Activated CD4-positive, alpha-beta memory T cell treated with anti-CD3 and anti-CD28 coated beads for 36 hours (primary cell): ENCODE measurements at regions of chr7 and their contacts with region 1.

Region 1: DNA sequence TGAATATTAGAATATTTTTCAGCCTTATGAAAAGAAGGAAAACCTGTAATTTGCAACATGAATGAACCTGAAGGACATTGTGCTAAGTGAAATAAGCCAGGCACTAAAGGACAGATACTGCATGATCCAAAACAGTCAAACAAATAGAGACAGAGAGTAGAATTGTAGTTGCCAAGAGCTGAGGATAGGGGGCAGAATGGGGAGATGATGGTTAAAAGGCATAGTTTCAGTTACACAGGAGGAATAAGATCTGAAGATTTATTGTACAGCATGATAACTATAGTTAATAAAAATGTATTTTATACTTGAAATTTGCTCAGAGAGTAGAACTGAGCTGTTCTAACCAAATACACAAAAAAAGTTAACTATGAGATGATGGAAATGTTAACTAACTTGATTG is 149.0 kb upstream of the TMEM106B start:
- DNase-seq: no peak
- H3K4me3 Mint-ChIP-seq: no peak overlapping the region
- H3K27ac Mint-ChIP-seq: no peak overlapping the region
- H3K4me1 Mint-ChIP-seq: peaks cover 13% of the 10 kb centered on the region
- H3K27me3 Mint-ChIP-seq: no peaks in the 10 kb centered on the region

Region 2: DNA sequence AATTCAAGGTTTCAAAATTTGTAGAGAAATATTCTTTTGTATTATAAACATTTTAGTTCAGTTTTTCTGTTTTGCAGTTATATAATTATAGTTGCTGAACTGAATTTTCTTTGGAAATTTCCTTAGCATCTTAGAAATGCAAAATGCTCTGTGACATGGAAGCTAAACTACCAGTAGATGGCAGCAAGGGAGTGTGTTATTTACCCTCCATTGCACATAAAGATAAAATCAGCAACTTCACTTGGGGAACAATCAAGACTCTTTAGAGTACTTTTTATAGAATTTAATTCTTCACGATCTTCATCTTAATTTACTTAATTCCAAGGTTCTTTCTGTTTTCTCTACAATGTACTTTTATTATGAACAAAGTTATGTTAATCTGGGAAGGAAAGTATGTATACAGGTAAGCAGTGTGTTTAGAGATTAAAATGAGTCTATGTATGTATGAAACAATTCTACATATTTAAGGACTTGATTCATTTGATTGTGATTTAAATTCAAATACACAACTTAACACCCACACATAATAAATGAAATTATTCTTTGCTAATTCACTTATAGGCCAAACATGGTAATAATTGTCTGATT is 634.3 kb before region 1 on chr7:
- CTCF ChIA-PET with region 1: no interaction called
- POLR2A ChIA-PET with region 1: no interaction called
- intact Hi-C with region 1: loop called (anchors 5 kb)
- DNase-seq: no peak
- H3K4me3 Mint-ChIP-seq: no peak overlapping the region
- H3K27ac Mint-ChIP-seq: no peak overlapping the region
- H3K4me1 Mint-ChIP-seq: no peaks in the 10 kb centered on the region
- H3K27me3 Mint-ChIP-seq: no peaks in the 10 kb centered on the region

Region 3: DNA sequence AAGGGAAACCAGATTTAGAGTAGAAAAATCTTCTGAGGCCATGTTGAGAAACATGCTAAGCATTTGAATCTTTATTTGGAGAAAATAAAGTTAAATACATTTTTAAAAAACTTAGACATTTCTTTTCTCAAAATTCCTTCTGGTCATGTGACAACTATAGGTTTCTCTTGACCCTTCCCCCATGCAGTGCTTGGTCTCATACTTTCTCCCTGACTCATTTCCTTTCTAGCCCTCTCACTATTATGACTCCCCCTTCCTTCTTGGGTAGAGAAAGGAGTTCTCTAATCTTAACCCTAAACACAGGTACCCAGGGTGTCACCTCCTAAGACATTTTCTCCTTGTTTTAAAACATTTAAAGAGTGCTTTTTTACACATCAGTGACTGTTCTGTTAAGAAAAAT is 30.4 kb before region 1 on chr7:
- CTCF ChIA-PET with region 1: no interaction called
- POLR2A ChIA-PET with region 1: no interaction called
- intact Hi-C with region 1: no loop called
- DNase-seq: no peak
- H3K4me3 Mint-ChIP-seq: no peak overlapping the region
- H3K27ac Mint-ChIP-seq: no peak overlapping the region
- H3K4me1 Mint-ChIP-seq: no peaks in the 10 kb centered on the region
- H3K27me3 Mint-ChIP-seq: peaks cover 6% of the 10 kb centered on the region

Region 4: DNA sequence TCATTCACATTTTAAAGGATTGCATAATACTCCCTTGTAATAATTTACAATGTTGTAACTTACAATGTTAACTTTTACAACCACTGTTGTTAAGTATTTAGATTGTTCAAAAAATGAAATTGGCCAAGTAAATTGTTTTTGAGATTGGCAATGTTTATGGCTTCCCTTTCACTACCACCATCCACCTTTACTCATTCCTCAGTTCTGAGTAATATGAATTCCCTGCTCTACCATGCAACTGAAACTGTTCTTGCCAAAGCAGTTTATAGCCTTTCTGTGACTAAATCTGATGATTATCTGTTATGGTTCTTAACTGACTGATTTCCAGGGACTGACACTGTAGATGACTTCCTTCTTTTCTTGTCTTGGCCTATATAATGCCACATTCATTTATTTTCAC is 68.6 kb after region 1 on chr7:
- CTCF ChIA-PET with region 1: no interaction called
- POLR2A ChIA-PET with region 1: no interaction called
- intact Hi-C with region 1: no loop called
- DNase-seq: no peak
- H3K4me3 Mint-ChIP-seq: no peak overlapping the region
- H3K27ac Mint-ChIP-seq: no peak overlapping the region
- H3K4me1 Mint-ChIP-seq: peaks cover 11% of the 10 kb centered on the region
- H3K27me3 Mint-ChIP-seq: no peaks in the 10 kb centered on the region